BJ (cell line): ENCODE measurements at regions of chr2 and their contacts with region 1.

Region 1: GRCh38 chr2:38274286-38275276 is 102.5 kb downstream of the ATL2 start:
- DNase-seq: peak; percentile 30
- H3K4me3 ChIP-seq: no peak overlapping the region
- H3K27me3 ChIP-seq: no peaks in the 10 kb centered on the region; the same call in 1 of the 2 replicates
- CTCF ChIP-seq: peak; percentile 58

Region 2: DNA sequence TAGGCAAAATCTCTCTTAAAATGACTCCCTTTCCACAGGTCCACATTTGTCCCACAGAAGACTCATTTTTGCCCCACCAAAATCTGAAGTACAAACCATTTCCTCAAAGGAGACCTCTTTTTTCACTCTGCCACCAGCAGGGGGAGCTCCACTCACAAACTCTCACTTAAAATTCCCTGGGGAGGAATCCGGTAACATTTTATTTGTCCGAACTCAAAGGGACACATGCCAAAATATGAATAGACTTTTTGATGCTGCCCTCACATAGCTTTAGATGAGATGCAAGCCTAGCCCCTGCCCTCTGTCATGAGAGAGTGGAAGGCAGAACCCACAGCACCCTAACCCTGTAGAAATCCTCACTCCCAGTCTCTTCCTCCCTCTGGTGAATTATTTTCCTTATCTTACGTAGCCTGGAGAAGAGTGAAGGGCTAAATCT is 292.4 kb before region 1 on chr2:
- CTCF ChIA-PET with region 1: interaction called, 17 read pairs
- POLR2A ChIA-PET with region 1: interaction called, 3 read pairs
- DNase-seq: peak; percentile 8
- H3K4me3 ChIP-seq: no peak overlapping the region
- H3K27me3 ChIP-seq: no peaks in the 10 kb centered on the region
- CTCF ChIP-seq: peak; percentile 83

Region 3: GRCh38 chr2:37993143-37993542 is 281.4 kb before region 1 on chr2:
- CTCF ChIA-PET with region 1: interaction called, 11 read pairs
- POLR2A ChIA-PET with region 1: no interaction called
- DNase-seq: no peak
- H3K4me3 ChIP-seq: no peak overlapping the region
- H3K27me3 ChIP-seq: no peaks in the 10 kb centered on the region
- CTCF ChIP-seq: no peak

Region 4: GRCh38 chr2:38076606-38077430 is 197.8 kb before region 1 on chr2:
- CTCF ChIA-PET with region 1: interaction called, 14 read pairs
- POLR2A ChIA-PET with region 1: no interaction called
- DNase-seq: peak; percentile 66
- H3K4me3 ChIP-seq: peak overlapping the region; percentile 46
- H3K27me3 ChIP-seq: peaks cover 23% of the 10 kb centered on the region
- CTCF ChIP-seq: no peak; the same call in 1 of the 2 replicates

Region 5: DNA sequence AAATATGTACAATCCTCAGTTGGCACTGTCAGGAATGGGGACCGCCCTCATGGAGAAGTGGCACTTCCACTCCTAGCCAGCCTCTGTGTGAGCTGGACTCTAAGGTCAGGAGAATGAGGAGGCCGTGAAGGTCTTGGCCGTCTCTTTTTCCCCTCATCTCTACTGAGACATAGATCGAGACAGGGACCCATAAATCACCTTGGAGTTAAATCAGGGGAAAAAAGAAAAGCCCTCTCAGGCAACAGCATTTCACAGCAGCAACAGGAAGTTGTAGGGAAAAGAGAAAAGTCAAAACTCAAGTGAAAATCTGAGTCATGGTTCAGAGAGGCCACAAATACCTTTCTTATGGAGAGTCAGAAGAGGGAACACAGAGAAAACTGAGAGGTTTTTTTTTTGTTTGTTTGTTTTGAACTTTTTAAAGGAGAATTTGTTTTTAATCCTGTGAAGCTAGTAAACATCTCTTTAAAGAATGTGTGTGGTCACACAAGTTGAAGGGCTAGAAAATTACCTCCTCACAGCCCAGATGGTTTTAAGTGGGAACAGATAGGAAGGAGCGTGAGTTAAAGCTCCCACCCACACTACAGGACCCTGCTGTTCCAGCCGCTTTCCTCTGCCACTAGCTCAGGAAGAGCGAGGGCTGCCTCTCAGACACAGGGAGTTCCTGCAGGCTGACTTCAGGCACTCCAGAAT is 168.0 kb before region 1 on chr2:
- CTCF ChIA-PET with region 1: interaction called, 4 read pairs
- POLR2A ChIA-PET with region 1: interaction called, 10 read pairs
- DNase-seq: peak; percentile 49
- H3K4me3 ChIP-seq: no peak overlapping the region
- H3K27me3 ChIP-seq: peaks cover 2% of the 10 kb centered on the region; the same call in 1 of the 2 replicates
- CTCF ChIP-seq: no peak

Region 6: DNA sequence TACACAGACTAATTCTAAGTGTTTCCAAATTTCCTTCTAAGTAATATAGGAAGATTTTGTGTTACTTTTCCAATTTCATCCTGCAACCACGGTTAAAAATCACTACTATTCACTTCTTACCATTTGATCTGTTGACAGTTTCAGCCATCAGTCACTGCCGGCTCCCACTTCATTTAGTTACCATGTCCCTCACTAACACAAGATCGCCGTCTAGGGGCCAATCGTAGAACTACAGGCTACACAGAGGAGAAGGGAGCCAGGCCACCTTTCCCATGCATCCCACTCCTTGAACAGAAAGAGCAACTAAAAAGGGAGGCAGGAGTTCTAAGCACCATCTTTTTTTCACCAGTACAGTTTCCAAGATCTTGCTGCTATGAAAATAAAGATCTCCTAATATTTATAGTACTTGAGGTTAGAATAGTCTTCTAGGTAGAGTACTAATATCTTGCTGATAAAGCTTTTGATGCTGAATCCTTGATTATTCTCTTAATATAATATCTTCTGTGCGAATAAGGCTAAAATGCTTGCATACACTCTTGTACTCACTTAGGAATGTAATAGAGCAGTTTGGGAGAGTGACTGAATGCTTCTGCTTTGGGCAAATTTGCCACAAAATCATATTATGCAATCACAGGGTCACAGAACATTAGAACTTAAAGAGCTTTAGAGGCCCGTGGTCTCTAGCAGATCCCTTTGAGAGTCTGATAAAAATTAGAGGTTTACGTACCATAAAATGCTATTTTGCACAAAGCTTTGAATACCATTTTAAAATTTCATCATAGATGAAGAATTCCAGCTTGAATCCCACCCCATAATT is 159.2 kb before region 1 on chr2:
- CTCF ChIA-PET with region 1: interaction called, 11 read pairs
- POLR2A ChIA-PET with region 1: no interaction called
- DNase-seq: no peak
- H3K4me3 ChIP-seq: no peak overlapping the region
- H3K27me3 ChIP-seq: peaks cover 6% of the 10 kb centered on the region; the same call in 1 of the 2 replicates
- CTCF ChIP-seq: peak; percentile 94